Dendritic cell treated with granulocyte-macrophage colony-stimulating factor and Interleukin-4, amounts not matched to agents 40 ng/mL and 50 ng/mL, for 4 days (primary cell): ENCODE measurements at regions of chr1 and their contacts with region 1.

Region 1: DNA sequence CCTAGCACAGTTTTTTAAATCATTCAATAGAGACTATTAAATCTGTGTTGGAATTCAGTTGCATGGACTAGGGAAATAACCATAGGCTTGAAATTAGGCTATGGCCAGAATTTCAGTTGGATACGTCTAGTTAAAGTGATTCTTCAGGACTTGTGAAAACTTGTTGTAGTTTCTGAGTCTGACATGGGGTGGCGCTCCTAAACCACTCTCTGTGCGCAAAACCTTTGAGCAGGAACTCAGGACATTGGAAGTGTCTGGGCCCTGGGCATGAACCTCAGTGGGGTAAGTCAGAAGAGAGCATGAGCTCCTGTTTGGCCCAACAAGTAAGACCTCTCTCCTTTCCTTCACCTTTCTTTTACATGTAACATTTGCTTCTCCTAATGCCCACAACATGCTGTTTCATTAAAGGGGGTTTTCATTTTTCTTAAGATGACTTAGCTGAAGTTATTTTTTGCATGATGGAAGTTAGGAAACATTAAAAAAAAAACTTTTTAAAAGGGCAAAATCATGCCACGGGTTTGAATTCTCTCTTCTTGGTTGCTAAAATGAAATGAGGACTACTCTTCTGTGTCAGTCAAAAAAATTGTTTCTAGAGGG is 17.1 kb upstream of the CCDC190 start:
- H3K4me3 Mint-ChIP-seq: no peak overlapping the region
- H3K27ac Mint-ChIP-seq: no peak overlapping the region
- H3K4me1 Mint-ChIP-seq: peaks cover 7% of the 10 kb centered on the region
- H3K27me3 Mint-ChIP-seq: peaks cover 26% of the 10 kb centered on the region

Region 2: DNA sequence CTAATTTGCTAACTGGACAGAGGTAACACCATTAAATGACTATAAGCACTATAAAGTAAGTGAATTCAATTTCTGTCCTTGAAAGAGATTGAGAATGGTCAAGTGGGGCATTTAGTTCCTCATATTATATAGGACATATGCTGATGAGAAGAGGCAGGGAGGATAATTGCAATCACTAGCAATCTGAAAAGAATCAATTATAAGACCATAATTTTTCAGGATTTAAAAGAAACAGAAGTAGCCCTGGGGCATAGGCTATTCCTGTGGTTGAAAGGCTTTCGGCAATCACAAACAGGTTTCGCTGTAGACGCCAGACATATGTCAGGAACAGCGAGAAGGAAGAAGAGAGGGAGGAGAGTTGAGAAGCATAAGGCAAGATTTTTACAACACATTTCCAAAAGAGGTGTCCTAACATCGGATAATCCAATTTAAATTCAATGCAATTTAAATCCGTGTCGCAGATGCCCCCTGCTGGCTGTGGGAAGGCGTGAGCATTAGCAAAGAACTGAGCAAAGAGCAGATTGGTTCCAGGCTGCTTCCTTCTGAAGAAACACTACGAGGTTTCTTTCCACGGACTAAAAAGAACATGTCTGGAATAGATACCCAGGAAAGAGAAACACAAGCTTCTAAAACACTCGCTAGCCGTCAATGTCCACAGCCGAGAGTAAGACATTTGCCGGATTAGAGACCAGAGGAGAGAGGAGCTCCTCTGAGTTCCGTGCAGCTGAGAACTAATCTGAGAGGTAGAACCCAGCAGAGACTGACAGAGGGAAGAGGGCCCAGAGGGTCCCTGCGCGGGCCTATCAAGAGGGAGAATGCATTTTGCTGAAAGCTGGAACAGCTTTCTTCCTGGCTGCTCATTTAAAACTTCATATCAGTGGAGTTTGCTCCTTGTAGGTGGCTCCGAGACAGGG is 296.7 kb after region 1 on chr1:
- intact Hi-C with region 1: loop called (anchors 1 kb)
- H3K4me3 Mint-ChIP-seq: no peak overlapping the region
- H3K27ac Mint-ChIP-seq: no peak overlapping the region
- H3K4me1 Mint-ChIP-seq: no peaks in the 10 kb centered on the region
- H3K27me3 Mint-ChIP-seq: peaks cover 2% of the 10 kb centered on the region